Activated naive CD8-positive, alpha-beta T cell treated with anti-CD3 and anti-CD28 coated beads, Interleukin-2, amount 10 ng/mL, durations not matched to agents 7 days and 5 days (primary cell): ENCODE measurements at regions of chr22 and their contacts with region 1.

Region 1: GRCh38 chr22:36331306-36331911 is 56.4 kb downstream of the MYH9 start:
- DNase-seq: peak; percentile 73
- ATAC-seq: peak; percentile 60
- H3K4me3 Mint-ChIP-seq: peak overlapping the region; percentile 90
- H3K27ac Mint-ChIP-seq: peak overlapping the region; percentile 98
- H3K4me1 Mint-ChIP-seq: peaks cover 88% of the 10 kb centered on the region
- H3K27me3 Mint-ChIP-seq: no peaks in the 10 kb centered on the region

Region 2: DNA sequence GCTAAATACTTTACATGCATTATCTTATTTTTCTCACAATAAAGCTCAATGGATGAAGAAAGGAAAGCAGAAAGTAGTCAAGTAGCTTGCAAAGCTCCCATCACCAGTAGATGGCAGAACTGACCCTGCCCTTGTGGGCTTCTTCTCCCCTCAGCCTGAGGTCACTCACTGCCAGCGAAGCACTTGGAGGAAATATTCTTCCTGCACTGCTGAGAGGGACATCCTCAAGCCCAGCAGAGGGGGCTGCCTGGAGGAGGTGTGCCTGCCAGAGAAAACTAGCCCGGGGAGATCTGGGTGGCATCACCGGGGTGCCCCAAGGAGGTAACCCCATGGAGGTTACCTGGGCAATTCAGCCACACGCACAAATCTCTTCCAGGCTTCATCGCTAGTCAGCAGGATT is 136.4 kb before region 1 on chr22:
- POLR2A ChIA-PET with region 1: no interaction called
- DNase-seq: peak; percentile 47
- ATAC-seq: peak; percentile 66
- H3K4me3 Mint-ChIP-seq: no peak overlapping the region
- H3K27ac Mint-ChIP-seq: no peak overlapping the region
- H3K4me1 Mint-ChIP-seq: peaks cover 33% of the 10 kb centered on the region
- H3K27me3 Mint-ChIP-seq: no peaks in the 10 kb centered on the region

Region 3: GRCh38 chr22:36286471-36287224 is 44.8 kb before region 1 on chr22:
- POLR2A ChIA-PET with region 1: no interaction called
- DNase-seq: peak; percentile 83
- ATAC-seq: peak; percentile 67
- H3K4me3 Mint-ChIP-seq: no peak overlapping the region
- H3K27ac Mint-ChIP-seq: peak overlapping the region; percentile 46
- H3K4me1 Mint-ChIP-seq: peaks cover 21% of the 10 kb centered on the region
- H3K27me3 Mint-ChIP-seq: no peaks in the 10 kb centered on the region

Region 4: DNA sequence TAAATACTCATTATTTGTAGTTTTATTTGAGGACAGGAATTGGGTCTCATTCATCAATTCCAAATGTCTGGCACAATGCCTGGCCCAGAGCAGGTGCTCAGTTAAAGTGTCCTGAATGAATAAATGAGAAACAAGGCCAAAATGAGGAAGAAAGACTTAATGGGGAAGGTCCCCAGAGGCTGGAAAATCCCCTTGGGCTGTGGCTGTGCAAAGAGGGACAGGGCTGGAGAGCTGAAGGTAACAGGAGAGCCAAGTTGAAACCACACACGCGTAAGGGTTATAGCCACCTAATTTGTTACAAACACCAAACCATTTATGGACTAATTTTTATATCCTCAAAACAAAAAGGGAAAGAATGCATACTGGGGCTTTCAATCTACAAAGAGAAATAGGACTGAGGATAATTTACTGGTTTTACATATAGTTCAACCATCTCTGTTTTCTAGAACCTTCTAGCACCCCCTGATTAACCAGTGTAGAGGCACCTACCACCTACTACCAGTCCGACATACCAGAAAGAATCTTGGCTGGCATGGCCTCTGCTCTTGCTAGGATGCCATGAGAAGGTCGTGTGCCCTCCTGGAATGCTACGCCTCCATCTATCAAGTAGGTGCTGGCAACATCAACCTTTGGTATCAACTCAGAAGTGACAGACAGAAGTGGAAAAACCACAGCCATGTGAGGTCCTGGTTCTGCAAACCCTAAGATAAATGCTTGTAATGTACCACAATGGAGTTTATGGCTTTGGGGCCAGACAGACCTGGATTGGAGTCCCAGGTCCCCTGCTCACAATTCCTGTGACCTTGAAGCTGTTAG is 28.0 kb after region 1 on chr22:
- POLR2A ChIA-PET with region 1: interaction called, 10 read pairs
- DNase-seq: no peak
- ATAC-seq: no peak
- H3K4me3 Mint-ChIP-seq: peak overlapping the region; percentile 60
- H3K27ac Mint-ChIP-seq: peak overlapping the region; percentile 87
- H3K4me1 Mint-ChIP-seq: peaks cover 84% of the 10 kb centered on the region
- H3K27me3 Mint-ChIP-seq: no peaks in the 10 kb centered on the region

Region 5: DNA sequence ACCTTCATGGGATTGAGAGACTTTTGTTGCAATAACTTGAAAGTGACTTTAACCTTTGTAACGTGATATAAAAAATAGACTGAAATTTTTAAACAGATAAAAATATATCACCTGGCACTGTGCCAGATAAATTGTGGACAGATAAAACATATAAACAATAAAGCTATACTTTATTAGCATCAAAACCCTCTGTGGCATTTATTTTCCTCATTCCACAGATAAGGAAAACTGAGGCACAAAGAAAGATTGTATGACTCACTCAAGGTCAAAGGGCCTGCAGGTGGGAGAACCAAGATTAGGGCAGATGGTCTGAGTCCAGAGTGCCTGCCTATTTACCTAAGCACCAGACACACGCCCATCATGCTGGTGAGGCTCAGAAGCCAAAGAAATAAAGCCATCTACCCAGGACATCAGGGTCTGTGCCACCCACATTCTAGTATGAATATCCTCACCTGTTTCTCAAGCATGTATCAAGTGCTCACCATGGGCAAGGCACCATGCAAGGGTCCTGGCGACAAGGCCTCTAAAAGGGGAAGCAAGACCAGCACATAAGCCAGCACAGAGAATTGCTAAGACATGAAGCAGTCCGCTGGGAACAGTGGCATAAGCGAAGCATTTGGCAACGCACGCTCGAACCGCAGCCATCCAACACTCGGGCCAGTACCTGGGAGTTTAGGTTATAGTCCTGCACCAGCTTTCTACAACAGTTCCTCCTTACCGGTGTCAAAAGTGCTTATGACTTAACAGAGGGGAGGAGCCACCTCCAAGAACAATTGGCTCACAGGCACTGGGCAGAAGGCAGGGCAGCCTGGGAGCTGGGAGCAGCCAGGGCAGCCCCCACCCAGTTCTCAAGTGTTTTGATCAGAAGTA is 38.7 kb after region 1 on chr22:
- POLR2A ChIA-PET with region 1: interaction called, 21 read pairs
- DNase-seq: no peak
- ATAC-seq: peak; percentile 44
- H3K4me3 Mint-ChIP-seq: peak overlapping the region; percentile 91
- H3K27ac Mint-ChIP-seq: peak overlapping the region; percentile 96
- H3K4me1 Mint-ChIP-seq: peaks cover 86% of the 10 kb centered on the region
- H3K27me3 Mint-ChIP-seq: no peaks in the 10 kb centered on the region

Region 6: GRCh38 chr22:36387752-36388518 is 56.5 kb after region 1 on chr22 and contains the start of gene MYH9:
- POLR2A ChIA-PET with region 1: interaction called, 62 read pairs
- DNase-seq: peak; percentile 99
- ATAC-seq: peak; percentile 80
- H3K4me3 Mint-ChIP-seq: peak within 1 kb of the TSS; percentile 98
- H3K27ac Mint-ChIP-seq: peak within 1 kb of the TSS; percentile 94
- H3K4me1 Mint-ChIP-seq: peaks cover 31% of the 10 kb centered on the region
- H3K27me3 Mint-ChIP-seq: no peaks in the 10 kb centered on the region
- total RNA-seq, gene MYH9: 803 to 821 TPM